Activated CD8-positive, alpha-beta T cell treated with anti-CD3 and anti-CD28 coated beads, Interleukin-2, amount 10 ng/mL, durations not matched to agents 7 days and 5 days (primary cell): ENCODE measurements at regions of chr10 and their contacts with region 1.

Region 1: GRCh38 chr10:72048450-72049124 is 39.8 kb downstream of the SPOCK2 start:
- DNase-seq: peak; percentile 93
- ATAC-seq: peak; percentile 97
- H3K4me3 Mint-ChIP-seq: no peak overlapping the region
- H3K27ac Mint-ChIP-seq: peak overlapping the region; percentile 60
- H3K4me1 Mint-ChIP-seq: peaks cover 14% of the 10 kb centered on the region
- H3K27me3 Mint-ChIP-seq: no peaks in the 10 kb centered on the region

Region 2: DNA sequence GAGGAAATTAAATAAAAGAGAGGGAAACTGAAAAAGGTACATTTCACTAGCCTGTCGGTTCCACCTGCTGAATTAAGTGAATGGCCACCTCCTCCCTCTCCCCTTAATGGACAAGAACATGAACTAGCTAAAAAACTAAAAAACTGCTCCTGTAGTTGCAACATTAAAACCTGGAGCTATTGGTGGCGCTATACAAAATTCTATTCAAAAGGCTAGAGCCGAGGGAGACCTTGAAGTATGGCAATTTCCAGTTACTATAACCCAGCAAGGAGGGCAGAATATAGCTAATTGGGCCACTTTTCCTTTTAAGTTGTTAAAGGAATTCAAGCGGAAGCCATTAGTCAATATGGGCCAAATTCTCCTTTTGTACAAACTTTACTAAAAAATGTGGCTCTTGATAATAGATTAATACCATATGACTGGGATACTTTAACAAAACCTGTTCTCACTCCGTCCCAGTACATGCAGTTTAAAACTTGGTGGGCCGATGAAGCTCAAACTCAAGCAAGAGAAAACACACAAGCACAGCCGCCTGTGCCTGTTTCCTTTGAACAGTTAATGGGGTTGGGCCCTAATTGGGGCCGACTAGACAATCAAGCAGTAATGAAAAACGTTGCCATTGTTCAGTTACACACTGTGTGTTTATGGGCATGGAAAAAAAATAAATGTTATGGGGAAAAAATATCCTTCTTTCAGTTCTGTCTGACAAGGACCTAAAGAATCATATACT is 90.9 kb before region 1 on chr10:
- CTCF ChIA-PET with region 1: interaction called, 21 read pairs
- POLR2A ChIA-PET with region 1: no interaction called
- DNase-seq: no peak
- ATAC-seq: no peak
- H3K4me3 Mint-ChIP-seq: no peak overlapping the region
- H3K27ac Mint-ChIP-seq: no peak overlapping the region
- H3K4me1 Mint-ChIP-seq: no peaks in the 10 kb centered on the region
- H3K27me3 Mint-ChIP-seq: peaks cover 31% of the 10 kb centered on the region

Region 3: DNA sequence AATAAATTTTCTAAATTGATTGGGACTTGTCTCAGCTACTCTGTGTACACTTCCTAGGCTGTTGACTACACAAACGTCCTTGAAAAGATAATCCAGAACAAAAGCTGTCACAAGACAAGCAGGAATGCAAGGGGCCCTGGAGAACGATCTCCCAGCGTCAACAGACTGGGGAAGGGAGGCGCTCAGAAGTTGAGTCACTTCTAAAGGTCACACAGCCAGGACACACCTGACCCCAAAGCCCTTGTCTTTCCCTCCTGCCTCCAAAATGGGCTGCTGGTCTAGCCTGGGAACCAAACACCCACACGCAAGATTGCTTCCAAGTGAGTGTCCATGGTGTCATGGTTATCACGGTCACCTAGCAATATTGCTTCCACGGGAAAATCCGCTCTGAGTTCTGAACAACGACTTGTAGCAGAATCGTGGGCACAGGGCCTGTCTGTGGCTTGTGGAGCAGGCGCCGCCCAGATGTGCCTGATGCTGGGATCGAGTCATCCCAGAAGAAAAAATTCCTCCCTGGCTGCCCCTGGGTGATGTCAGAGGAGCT is 10.1 kb before region 1 on chr10:
- CTCF ChIA-PET with region 1: interaction called, 29 read pairs
- POLR2A ChIA-PET with region 1: no interaction called
- DNase-seq: no peak
- ATAC-seq: no peak
- H3K4me3 Mint-ChIP-seq: no peak overlapping the region
- H3K27ac Mint-ChIP-seq: no peak overlapping the region
- H3K4me1 Mint-ChIP-seq: no peaks in the 10 kb centered on the region
- H3K27me3 Mint-ChIP-seq: peaks cover 3% of the 10 kb centered on the region

Region 4: GRCh38 chr10:72079356-72079755 is 30.8 kb after region 1 on chr10:
- CTCF ChIA-PET with region 1: interaction called, 16 read pairs
- POLR2A ChIA-PET with region 1: no interaction called
- DNase-seq: peak; percentile 78
- ATAC-seq: peak; percentile 49
- H3K4me3 Mint-ChIP-seq: peak overlapping the region; percentile 34
- H3K27ac Mint-ChIP-seq: peak overlapping the region; percentile 82
- H3K4me1 Mint-ChIP-seq: peaks cover 91% of the 10 kb centered on the region
- H3K27me3 Mint-ChIP-seq: no peaks in the 10 kb centered on the region

Region 5: GRCh38 chr10:72114706-72115450 is 66.3 kb after region 1 on chr10:
- CTCF ChIA-PET with region 1: interaction called, 12 read pairs
- POLR2A ChIA-PET with region 1: no interaction called
- DNase-seq: no peak
- ATAC-seq: no peak
- H3K4me3 Mint-ChIP-seq: no peak overlapping the region
- H3K27ac Mint-ChIP-seq: no peak overlapping the region
- H3K4me1 Mint-ChIP-seq: peaks cover 4% of the 10 kb centered on the region
- H3K27me3 Mint-ChIP-seq: no peaks in the 10 kb centered on the region

Region 6: GRCh38 chr10:72215652-72216549 is 167.3 kb after region 1 on chr10 and contains the starts of genes ANAPC16 and ASCC1:
- CTCF ChIA-PET with region 1: interaction called, 21 read pairs
- POLR2A ChIA-PET with region 1: interaction called, 3 read pairs
- DNase-seq: peak; percentile 95
- ATAC-seq: peak; percentile 88
- H3K4me3 Mint-ChIP-seq: peak within 1 kb of the TSS; percentile 96
- H3K27ac Mint-ChIP-seq: peak within 1 kb of the TSS; percentile 96
- H3K4me1 Mint-ChIP-seq: peaks cover 52% of the 10 kb centered on the region
- H3K27me3 Mint-ChIP-seq: no peaks in the 10 kb centered on the region
- total RNA-seq, gene ANAPC16: 72.9 TPM
- total RNA-seq, gene ASCC1: 34.8 to 40.3 TPM

Region 7: GRCh38 chr10:72337020-72337629 is 288.5 kb after region 1 on chr10:
- CTCF ChIA-PET with region 1: interaction called, 80 read pairs
- POLR2A ChIA-PET with region 1: no interaction called
- DNase-seq: peak; percentile 75
- ATAC-seq: no peak
- H3K4me3 Mint-ChIP-seq: no peak overlapping the region
- H3K27ac Mint-ChIP-seq: peak overlapping the region; percentile 22
- H3K4me1 Mint-ChIP-seq: peaks cover 71% of the 10 kb centered on the region
- H3K27me3 Mint-ChIP-seq: no peaks in the 10 kb centered on the region

Region 8: DNA sequence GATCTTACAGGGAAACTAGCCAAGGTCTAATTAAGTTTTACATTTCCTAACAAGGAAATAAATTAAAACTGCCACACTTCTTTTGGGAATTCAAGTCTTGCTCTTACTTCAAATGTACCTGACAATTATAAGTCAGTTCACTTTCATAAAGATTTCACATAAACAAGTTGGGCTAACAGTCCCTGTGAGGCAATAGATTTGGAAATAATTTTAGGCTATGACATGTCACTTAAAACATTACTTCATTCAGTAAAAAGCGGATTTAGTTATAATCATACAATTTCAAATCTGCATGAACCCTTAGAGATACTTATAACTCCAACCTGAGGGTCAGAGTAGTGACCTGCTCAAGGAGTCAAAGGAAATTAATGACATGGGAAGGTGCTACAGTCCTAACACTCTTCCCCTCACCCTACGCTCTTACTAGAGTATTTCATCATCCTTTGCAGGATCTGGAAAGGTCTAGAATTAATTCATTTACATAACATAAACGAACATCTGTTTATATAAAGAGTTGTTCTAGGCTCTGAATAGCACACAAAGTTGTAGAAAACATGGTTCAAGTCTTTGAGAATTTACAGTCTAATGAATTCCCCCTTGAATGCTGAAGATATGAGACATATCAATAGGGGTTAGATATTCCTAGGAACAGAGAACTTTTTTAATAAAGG is 338.5 kb after region 1 on chr10:
- CTCF ChIA-PET with region 1: no interaction called
- POLR2A ChIA-PET with region 1: no interaction called
- DNase-seq: no peak
- ATAC-seq: no peak
- H3K4me3 Mint-ChIP-seq: no peak overlapping the region
- H3K27ac Mint-ChIP-seq: no peak overlapping the region
- H3K4me1 Mint-ChIP-seq: peaks cover 4% of the 10 kb centered on the region
- H3K27me3 Mint-ChIP-seq: no peaks in the 10 kb centered on the region